Activated B cell treated with CpG ODN at 0.5 μM for 24 hours (primary cell): ENCODE measurements at regions of chr19 and their contacts with region 1.

Region 1: DNA sequence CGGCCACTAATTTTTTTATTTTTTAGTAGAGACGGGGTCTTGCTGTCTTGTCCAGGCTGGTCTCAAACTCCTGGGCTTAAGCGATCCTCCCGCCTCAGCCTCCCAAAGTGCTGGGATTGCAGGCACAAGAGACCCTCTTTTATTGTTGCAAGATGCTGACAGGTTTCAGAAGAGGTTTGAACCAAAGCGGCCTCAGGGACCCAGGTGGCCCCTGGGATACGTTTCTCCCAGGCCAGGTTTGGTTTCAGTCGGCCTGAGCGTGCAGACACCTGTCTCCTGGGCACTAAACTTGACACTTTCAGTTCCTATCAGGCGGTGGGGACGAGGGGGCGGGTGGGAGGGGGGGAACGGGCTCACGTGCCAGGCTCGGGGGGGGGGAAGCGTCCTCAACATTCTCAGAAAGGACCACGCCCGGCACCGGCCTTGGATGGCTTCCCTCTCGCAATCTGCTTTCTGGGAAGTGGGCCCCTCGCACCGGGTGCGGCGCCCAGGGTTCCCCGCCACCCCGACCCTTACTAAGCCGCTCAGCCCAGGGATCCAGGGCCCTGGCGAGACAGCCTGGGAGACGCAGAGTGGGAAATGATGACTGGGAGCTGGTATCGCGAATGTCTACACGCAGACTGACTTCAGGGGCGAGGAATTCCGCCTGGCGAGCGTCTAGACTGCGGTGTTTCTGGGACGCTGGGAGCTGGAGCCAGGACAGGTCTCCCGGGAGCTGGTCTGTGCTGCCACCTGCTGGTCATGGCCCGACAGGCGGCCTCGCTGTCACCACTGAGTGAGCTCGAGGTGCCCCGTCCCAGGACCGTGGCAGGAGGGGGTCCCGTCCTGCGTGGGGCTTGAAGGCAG is 91.6 kb downstream of the GNG7 start:
- DNase-seq: peak; percentile 89
- ATAC-seq: peak; percentile 43
- H3K4me3 Mint-ChIP-seq: peak overlapping the region; percentile 89
- H3K27ac Mint-ChIP-seq: peak overlapping the region; percentile 94
- H3K4me1 Mint-ChIP-seq: peaks cover 86% of the 10 kb centered on the region
- H3K27me3 Mint-ChIP-seq: no peaks in the 10 kb centered on the region
- CTCF ChIP-seq: peak; percentile 52

Region 2: DNA sequence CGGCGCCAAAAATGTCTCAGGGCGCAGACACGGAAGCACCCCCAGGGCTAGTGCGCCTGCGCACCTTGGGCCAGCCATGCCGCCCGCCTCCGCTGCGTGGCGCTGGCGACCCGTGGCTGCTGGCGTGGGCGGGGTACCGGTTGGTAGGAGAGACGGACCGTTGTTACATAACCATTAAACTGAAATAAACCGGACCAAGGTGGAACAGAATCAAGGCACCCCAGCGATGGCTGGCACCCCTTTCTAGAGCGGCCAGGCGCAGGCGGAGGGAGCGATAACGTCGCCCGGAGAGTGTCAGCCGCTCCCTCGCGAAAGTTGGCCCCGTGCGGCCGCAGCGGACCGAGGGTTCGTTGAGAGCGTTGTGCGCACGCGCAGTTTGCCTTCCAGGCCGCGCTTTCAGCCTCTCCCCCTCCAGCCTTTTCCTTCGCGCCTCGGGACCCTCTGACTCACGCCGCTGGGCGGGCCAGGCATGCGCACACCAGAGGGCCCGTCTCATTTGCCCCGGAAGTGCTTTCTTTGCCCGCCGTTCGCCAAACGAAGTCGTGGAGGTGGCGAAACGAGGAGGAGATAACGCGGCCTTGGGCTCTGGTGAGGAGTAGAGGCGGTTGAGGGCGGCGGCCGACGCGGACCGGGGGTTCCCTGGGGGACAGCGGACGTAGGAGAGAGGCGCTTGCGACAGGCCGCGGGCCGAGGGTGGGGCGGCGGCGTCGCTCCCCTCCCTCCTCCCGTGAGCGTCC is 374.4 kb before region 1 on chr19 and contains the starts of genes PLEKHJ1 and SF3A2:
- CTCF ChIA-PET with region 1: interaction called, 3 read pairs
- POLR2A ChIA-PET with region 1: interaction called, 3 read pairs
- intact Hi-C with region 1: loop called (anchors 1 kb)
- DNase-seq: peak; percentile 100
- ATAC-seq: peak; percentile 82
- H3K4me3 Mint-ChIP-seq: peak within 1 kb of the TSS; percentile 99
- H3K27ac Mint-ChIP-seq: peak within 1 kb of the TSS; percentile 99
- H3K4me1 Mint-ChIP-seq: peaks cover 69% of the 10 kb centered on the region
- H3K27me3 Mint-ChIP-seq: no peaks in the 10 kb centered on the region
- CTCF ChIP-seq: no peak
- total RNA-seq, gene PLEKHJ1: 74.4 and 74.9 TPM in 2 replicates
- total RNA-seq, gene SF3A2: 107 and 117 TPM in 2 replicates

Region 3: DNA sequence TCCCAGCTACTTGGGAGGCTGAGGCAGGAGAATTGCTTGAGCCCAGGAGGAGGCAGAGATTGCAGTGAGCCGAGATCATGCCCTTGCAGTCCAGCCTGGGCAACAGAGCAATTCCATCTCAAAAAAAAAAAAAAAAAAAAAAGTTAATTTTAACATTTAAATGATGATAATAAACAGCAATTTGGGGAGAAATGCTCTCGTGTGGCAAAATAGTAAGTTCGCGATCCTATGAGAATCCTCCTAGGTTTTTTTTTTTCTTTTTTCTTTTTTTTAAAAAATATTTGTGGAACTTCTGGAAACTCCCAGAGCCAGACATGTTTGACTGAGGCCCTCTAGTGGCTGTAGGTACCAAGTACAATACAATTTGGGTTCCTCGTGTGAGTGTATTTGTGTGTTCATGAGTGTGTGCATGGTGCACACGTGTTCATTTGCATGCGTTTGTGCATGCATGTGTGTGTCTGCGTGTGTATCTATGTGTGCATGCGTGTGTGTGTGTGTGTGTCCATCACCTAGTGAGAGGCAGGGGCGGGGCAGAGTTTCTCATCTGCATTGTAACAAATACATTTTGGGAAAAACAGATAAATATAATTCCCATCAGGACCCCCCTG is 219.6 kb before region 1 on chr19:
- CTCF ChIA-PET with region 1: interaction called, 6 read pairs
- POLR2A ChIA-PET with region 1: interaction called, 4 read pairs
- intact Hi-C with region 1: loop called (anchors 5 kb)
- DNase-seq: no peak
- ATAC-seq: peak; percentile 56
- H3K4me3 Mint-ChIP-seq: no peak overlapping the region
- H3K27ac Mint-ChIP-seq: peak overlapping the region; percentile 74
- H3K4me1 Mint-ChIP-seq: peaks cover 34% of the 10 kb centered on the region
- H3K27me3 Mint-ChIP-seq: no peaks in the 10 kb centered on the region
- CTCF ChIP-seq: peak; percentile 82

Region 4: GRCh38 chr19:2523630-2524311 is 87.1 kb before region 1 on chr19:
- CTCF ChIA-PET with region 1: no interaction called
- POLR2A ChIA-PET with region 1: interaction called, 14 read pairs
- intact Hi-C with region 1: no loop called
- DNase-seq: no peak
- ATAC-seq: no peak
- H3K4me3 Mint-ChIP-seq: no peak overlapping the region
- H3K27ac Mint-ChIP-seq: no peak overlapping the region
- H3K4me1 Mint-ChIP-seq: peaks cover 11% of the 10 kb centered on the region
- H3K27me3 Mint-ChIP-seq: no peaks in the 10 kb centered on the region
- CTCF ChIP-seq: no peak

Region 5: DNA sequence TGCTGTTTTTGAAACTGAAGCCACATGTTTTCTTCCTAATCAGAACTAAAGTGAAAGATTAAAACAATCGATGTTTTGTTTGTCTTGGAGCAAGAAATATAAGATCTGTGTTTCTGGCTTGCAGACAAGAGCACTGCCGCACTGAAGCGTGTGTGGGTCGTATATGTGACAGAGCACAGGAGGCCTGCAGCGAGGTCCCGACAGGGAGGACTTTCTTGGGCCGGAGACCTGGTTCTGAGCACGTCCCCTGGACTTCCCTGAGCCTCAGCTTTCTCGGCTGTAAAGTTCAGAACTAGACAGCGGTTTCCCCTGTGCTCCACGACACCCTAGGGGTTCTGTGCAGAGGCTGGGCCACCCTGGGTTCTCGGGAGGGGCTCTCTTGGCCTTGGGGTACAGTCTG is 74.4 kb before region 1 on chr19:
- CTCF ChIA-PET with region 1: no interaction called
- POLR2A ChIA-PET with region 1: no interaction called
- intact Hi-C with region 1: no loop called
- DNase-seq: no peak
- ATAC-seq: no peak
- H3K4me3 Mint-ChIP-seq: no peak overlapping the region
- H3K27ac Mint-ChIP-seq: no peak overlapping the region
- H3K4me1 Mint-ChIP-seq: peaks cover 20% of the 10 kb centered on the region
- H3K27me3 Mint-ChIP-seq: no peaks in the 10 kb centered on the region
- CTCF ChIP-seq: no peak

Region 6: DNA sequence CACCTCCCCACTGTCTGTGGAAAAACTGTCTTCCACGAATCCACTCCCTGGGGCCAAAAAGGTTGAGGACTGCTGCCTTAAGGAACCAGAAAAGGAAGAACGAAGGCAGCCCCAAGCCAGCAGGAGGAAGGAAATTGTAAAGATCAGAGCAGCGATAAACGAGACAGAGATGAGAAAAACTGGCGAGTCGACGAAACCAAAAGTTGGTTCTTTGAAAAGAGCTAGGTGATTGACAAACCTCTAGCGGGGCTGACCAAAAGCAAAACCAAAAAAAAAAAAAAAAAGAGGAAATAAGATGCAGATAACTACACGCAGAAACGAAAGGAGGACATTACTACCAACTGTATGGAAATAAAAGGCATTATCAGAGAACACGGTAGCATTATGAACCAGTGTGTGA is 58.0 kb before region 1 on chr19:
- CTCF ChIA-PET with region 1: interaction called, 3 read pairs
- POLR2A ChIA-PET with region 1: interaction called, 20 read pairs
- intact Hi-C with region 1: loop called (anchors 1 kb)
- DNase-seq: peak; percentile 27
- ATAC-seq: peak; percentile 94
- H3K4me3 Mint-ChIP-seq: peak overlapping the region; percentile 75
- H3K27ac Mint-ChIP-seq: peak overlapping the region; percentile 89
- H3K4me1 Mint-ChIP-seq: peaks cover 28% of the 10 kb centered on the region
- H3K27me3 Mint-ChIP-seq: no peaks in the 10 kb centered on the region
- CTCF ChIP-seq: no peak

Region 7: DNA sequence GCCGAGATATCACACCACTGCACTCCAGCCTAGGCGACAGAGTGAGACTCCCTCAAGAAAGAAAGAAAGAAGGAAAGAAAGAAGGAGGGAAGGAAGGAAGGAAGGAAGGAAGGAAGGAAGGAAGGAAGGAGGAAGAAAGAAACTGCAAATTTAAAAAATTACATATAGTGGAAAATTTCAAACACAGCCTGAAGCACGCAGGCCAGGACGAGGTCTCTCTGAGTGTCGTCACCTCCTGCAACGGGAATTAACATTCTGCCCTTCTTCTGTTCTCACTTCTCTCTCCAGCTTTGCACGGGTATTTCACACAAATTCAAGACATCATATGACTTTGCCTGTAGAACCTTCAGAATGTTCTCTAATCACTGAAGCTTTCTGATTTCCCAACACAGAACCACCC is 16.5 kb before region 1 on chr19:
- CTCF ChIA-PET with region 1: interaction called, 19 read pairs
- POLR2A ChIA-PET with region 1: interaction called, 130 read pairs
- intact Hi-C with region 1: loop called (anchors 1 kb)
- DNase-seq: no peak
- ATAC-seq: peak; percentile 50
- H3K4me3 Mint-ChIP-seq: peak overlapping the region; percentile 60
- H3K27ac Mint-ChIP-seq: peak overlapping the region; percentile 90
- H3K4me1 Mint-ChIP-seq: peaks cover 57% of the 10 kb centered on the region
- H3K27me3 Mint-ChIP-seq: no peaks in the 10 kb centered on the region
- CTCF ChIP-seq: no peak

Region 8: GRCh38 chr19:2636897-2637683 is 26.2 kb after region 1 on chr19:
- CTCF ChIA-PET with region 1: interaction called, 336 read pairs
- POLR2A ChIA-PET with region 1: interaction called, 582 read pairs
- intact Hi-C with region 1: loop called (anchors 1 kb)
- DNase-seq: peak; percentile 74
- ATAC-seq: peak; percentile 52
- H3K4me3 Mint-ChIP-seq: peak overlapping the region; percentile 53
- H3K27ac Mint-ChIP-seq: peak overlapping the region; percentile 74
- H3K4me1 Mint-ChIP-seq: peaks cover 87% of the 10 kb centered on the region
- H3K27me3 Mint-ChIP-seq: no peaks in the 10 kb centered on the region
- CTCF ChIP-seq: peak; percentile 31